B cell (primary cell): ENCODE measurements at regions of chr20 and their contacts with region 1.

Region 1: DNA sequence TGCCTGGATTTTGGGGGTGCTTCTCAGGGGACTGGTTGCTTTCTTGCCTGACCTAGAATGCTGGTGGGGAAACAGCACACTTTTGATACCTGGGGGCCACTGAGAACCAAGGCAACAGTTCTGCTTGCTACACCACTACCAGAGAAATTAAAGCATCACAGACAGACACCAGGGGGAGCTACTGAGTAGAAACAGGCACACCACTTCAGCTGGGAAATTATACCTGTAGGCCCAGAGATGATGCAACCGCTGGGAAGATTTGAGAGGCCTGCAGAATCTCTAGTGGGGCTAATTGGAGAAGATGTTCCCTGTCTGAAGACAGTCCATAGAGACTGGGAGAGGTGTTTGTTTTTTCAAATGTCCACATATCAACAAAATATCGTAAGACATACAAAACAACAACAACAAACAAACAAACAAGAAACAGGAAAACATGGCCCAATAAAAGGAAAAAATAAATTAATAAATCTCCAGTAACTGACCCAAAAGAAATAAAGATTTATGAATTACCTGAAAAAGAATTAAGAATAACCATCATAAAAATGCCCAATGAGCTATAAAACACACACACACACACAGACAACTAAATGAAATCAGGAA is 129.4 kb upstream of the RIN2 start:
- DNase-seq: peak; percentile 77
- ATAC-seq: peak; percentile 47
- H3K4me3 ChIP-seq: no peak overlapping the region
- H3K4me3 Mint-ChIP-seq: no peak overlapping the region
- H3K27ac ChIP-seq: no peak overlapping the region
- H3K27ac Mint-ChIP-seq: no peak overlapping the region
- H3K4me1 ChIP-seq: no peaks in the 10 kb centered on the region
- H3K4me1 Mint-ChIP-seq: no peaks in the 10 kb centered on the region
- H3K27me3 ChIP-seq: no peaks in the 10 kb centered on the region
- H3K27me3 Mint-ChIP-seq: peaks cover 23% of the 10 kb centered on the region
- CTCF ChIP-seq: peak; percentile 84

Region 2: GRCh38 chr20:19531446-19531845 is 97.2 kb before region 1 on chr20:
- CTCF ChIA-PET with region 1: no interaction called
- POLR2A ChIA-PET with region 1: no interaction called
- intact Hi-C with region 1: no loop called
- DNase-seq: no peak
- ATAC-seq: no peak
- H3K4me3 ChIP-seq: no peak overlapping the region
- H3K4me3 Mint-ChIP-seq: no peak overlapping the region
- H3K27ac ChIP-seq: no peak overlapping the region
- H3K27ac Mint-ChIP-seq: no peak overlapping the region
- H3K4me1 ChIP-seq: no peaks in the 10 kb centered on the region
- H3K4me1 Mint-ChIP-seq: no peaks in the 10 kb centered on the region
- H3K27me3 ChIP-seq: no peaks in the 10 kb centered on the region
- H3K27me3 Mint-ChIP-seq: peaks cover 7% of the 10 kb centered on the region
- CTCF ChIP-seq: no peak

Region 3: GRCh38 chr20:19802492-19803158 is 174.0 kb after region 1 on chr20:
- CTCF ChIA-PET with region 1: interaction called, 3 read pairs
- POLR2A ChIA-PET with region 1: no interaction called
- intact Hi-C with region 1: loop called (anchors 2 kb)
- DNase-seq: peak; percentile 51
- ATAC-seq: peak; percentile 41
- H3K4me3 ChIP-seq: no peak overlapping the region
- H3K4me3 Mint-ChIP-seq: no peak overlapping the region
- H3K27ac ChIP-seq: no peak overlapping the region
- H3K27ac Mint-ChIP-seq: no peak overlapping the region
- H3K4me1 ChIP-seq: peaks cover 13 to 14% of the 10 kb centered on the region in 2 donors
- H3K4me1 Mint-ChIP-seq: peaks cover 15% of the 10 kb centered on the region
- H3K27me3 ChIP-seq: no peaks in the 10 kb centered on the region
- H3K27me3 Mint-ChIP-seq: no peaks in the 10 kb centered on the region
- CTCF ChIP-seq: peak; percentile 56